ENCODE measurements at regions of chr13 and their contacts with region 1.

Region 1: GRCh38 chr13:75760131-75761021 is 124.2 kb downstream of the LMO7 start:
- DNase-seq: peak; percentile 33
- H3K4me3 Mint-ChIP-seq: peak overlapping the region; percentile 72
- H3K27ac Mint-ChIP-seq: peak overlapping the region; percentile 94
- H3K4me1 Mint-ChIP-seq: peaks cover under 1% of the 10 kb centered on the region
- H3K27me3 Mint-ChIP-seq: no peaks in the 10 kb centered on the region
- CTCF ChIP-seq: no peak

Region 2: GRCh38 chr13:75694722-75695121 is 65.7 kb before region 1 on chr13:
- CTCF ChIA-PET with region 1: interaction called, 10 read pairs
- intact Hi-C with region 1: no loop called
- DNase-seq: no peak
- H3K4me3 Mint-ChIP-seq: peak overlapping the region; percentile 13
- H3K27ac Mint-ChIP-seq: no peak overlapping the region
- H3K4me1 Mint-ChIP-seq: peaks cover 32% of the 10 kb centered on the region
- H3K27me3 Mint-ChIP-seq: no peaks in the 10 kb centered on the region
- CTCF ChIP-seq: no peak

Region 3: DNA sequence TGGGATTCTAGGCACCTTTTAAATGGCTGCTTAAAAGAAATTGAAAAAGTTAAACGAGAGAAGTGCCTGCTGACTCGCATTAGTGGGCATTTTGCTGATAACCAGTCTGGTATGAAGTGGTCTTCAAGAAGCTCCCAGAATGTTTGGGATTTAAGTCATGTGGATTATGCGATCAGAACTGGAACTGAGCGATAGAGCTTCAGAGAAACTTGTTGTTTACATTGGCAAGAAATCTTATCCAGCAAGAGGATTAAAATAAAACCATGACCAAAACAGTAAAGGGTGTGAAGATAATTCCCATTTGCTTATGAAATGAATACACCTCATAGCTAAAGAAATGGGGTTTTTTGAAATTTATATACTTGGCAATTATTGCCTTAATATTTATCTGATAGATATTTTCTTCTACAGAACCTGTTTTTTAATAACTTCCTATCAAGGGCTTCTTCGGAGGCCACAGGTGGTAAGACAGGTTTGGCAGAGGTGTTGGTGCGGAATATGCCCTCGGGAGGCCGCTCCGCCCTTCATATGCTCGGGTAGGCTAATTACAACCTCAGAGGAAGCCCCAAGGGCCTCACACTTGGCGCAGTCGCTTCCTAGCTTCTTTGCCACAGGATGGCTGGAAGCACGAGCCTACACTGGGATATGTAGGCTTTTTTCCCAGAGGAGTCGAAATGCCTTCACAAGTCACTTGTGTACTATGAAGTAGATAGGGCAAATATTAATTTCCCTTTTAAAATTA is 55.6 kb before region 1 on chr13:
- CTCF ChIA-PET with region 1: no interaction called
- intact Hi-C with region 1: loop called (anchors 2 kb)
- DNase-seq: peak; percentile 63
- H3K4me3 Mint-ChIP-seq: peak overlapping the region; percentile 45
- H3K27ac Mint-ChIP-seq: peak overlapping the region; percentile 93
- H3K4me1 Mint-ChIP-seq: no peaks in the 10 kb centered on the region
- H3K27me3 Mint-ChIP-seq: no peaks in the 10 kb centered on the region
- CTCF ChIP-seq: no peak

Region 4: DNA sequence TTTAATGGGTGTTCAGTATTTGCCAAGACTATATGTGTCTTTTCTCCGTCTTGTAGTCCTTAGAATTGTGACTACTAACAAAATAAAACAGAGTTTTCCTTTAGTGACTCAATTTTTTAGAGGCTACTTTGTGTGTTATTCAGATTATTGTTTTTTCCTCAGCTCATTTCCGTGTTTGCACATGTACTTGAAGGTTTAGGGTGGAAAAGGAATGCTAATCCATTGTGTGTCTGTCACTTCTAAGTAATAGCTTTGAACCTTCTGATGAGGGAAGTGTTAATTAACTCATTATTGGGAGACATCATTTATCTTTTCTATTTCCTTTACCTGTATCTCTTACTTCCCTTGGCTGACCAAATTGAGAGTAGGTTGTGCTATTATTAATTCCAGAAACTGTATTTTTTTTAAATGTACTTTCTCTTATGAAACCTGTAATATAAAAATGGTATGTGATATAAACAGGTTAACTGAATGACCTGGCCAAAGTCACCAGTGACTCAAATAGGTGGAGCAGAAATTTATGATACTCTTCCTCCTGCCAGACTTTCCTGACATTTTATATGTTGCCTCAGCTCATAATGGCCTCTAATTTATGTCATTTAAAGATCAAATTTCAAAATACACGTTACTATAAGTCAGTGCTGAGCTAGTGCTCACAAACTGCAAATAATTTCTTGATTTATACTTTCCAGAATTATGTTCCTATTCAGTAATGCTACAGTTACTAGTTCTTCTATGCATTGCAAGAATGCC is 35.4 kb before region 1 on chr13:
- CTCF ChIA-PET with region 1: no interaction called
- intact Hi-C with region 1: loop called (anchors 2 kb)
- DNase-seq: no peak
- H3K4me3 Mint-ChIP-seq: no peak overlapping the region
- H3K27ac Mint-ChIP-seq: peak overlapping the region; percentile 23
- H3K4me1 Mint-ChIP-seq: no peaks in the 10 kb centered on the region
- H3K27me3 Mint-ChIP-seq: no peaks in the 10 kb centered on the region
- CTCF ChIP-seq: no peak

Region 5: GRCh38 chr13:75798353-75799255 is 38.2 kb after region 1 on chr13:
- CTCF ChIA-PET with region 1: no interaction called
- intact Hi-C with region 1: loop called (anchors 5 kb)
- DNase-seq: no peak
- H3K4me3 Mint-ChIP-seq: no peak overlapping the region
- H3K27ac Mint-ChIP-seq: peak overlapping the region; percentile 39
- H3K4me1 Mint-ChIP-seq: no peaks in the 10 kb centered on the region
- H3K27me3 Mint-ChIP-seq: no peaks in the 10 kb centered on the region
- CTCF ChIP-seq: no peak

Region 6: GRCh38 chr13:75830842-75831241 is 70.5 kb after region 1 on chr13:
- CTCF ChIA-PET with region 1: no interaction called
- intact Hi-C with region 1: loop called (anchors 10 kb)
- DNase-seq: no peak
- H3K4me3 Mint-ChIP-seq: no peak overlapping the region
- H3K27ac Mint-ChIP-seq: no peak overlapping the region
- H3K4me1 Mint-ChIP-seq: peaks cover 14% of the 10 kb centered on the region
- H3K27me3 Mint-ChIP-seq: no peaks in the 10 kb centered on the region
- CTCF ChIP-seq: no peak

Measured in Calu3 (cell line).